ENCODE measurements at regions of chr6 and their contacts with region 1.

Region 1: DNA sequence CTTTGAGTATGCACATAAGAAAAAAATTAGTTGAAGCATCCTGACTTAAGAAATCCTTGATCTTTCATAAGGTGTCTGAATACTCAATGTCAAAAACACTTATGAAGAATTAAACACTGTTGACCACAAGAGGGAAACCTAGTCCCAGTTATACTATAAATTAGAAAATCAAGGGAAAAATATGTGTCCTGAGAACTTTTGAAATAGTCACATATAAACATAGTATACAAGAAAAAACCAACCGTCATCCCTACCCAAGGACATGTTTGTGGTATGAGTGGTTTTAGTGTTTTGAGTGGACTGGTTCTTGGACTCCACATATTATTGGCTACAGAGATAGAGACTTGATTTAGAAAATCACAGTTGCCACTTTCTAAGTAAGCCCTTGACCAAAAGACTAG is 7.6 kb upstream of the HLA-DRA start:
- DNase-seq: no peak
- H3K4me3 Mint-ChIP-seq: no peak overlapping the region
- H3K27ac Mint-ChIP-seq: no peak overlapping the region
- H3K4me1 Mint-ChIP-seq: no peaks in the 10 kb centered on the region
- H3K27me3 Mint-ChIP-seq: peaks cover 2% of the 10 kb centered on the region

Region 2: DNA sequence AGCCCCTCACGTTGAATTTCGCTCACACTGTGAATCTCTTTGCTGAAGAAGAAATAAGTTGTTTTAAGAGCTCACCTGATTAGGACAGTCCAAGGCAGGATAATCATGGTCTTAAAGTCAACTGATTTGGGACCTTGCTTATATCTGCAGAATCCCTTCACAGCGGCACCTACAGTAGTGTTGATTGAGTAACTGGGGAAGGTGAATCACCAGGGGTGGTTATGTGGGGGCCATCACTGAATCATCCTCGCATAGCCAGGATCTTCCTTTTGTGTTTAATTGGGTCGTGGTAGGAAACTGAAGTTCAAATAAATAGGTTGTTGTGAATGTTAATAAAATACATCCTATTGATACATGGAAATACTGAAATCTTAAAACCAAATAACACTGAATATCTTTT is 1048.9 kb before region 1 on chr6:
- CTCF ChIA-PET with region 1: no interaction called
- POLR2A ChIA-PET with region 1: no interaction called
- intact Hi-C with region 1: no loop called
- DNase-seq: peak; percentile 25
- H3K4me3 Mint-ChIP-seq: no peak overlapping the region
- H3K27ac Mint-ChIP-seq: no peak overlapping the region
- H3K4me1 Mint-ChIP-seq: no peaks in the 10 kb centered on the region
- H3K27me3 Mint-ChIP-seq: peaks cover 11% of the 10 kb centered on the region

Region 3: GRCh38 chr6:32298663-32299267 is 133.3 kb before region 1 on chr6:
- CTCF ChIA-PET with region 1: no interaction called
- POLR2A ChIA-PET with region 1: no interaction called
- intact Hi-C with region 1: no loop called
- DNase-seq: no peak
- H3K4me3 Mint-ChIP-seq: no peak overlapping the region
- H3K27ac Mint-ChIP-seq: no peak overlapping the region
- H3K4me1 Mint-ChIP-seq: no peaks in the 10 kb centered on the region
- H3K27me3 Mint-ChIP-seq: peaks cover 14% of the 10 kb centered on the region

Region 4: GRCh38 chr6:32387589-32388340 is 44.3 kb before region 1 on chr6:
- CTCF ChIA-PET with region 1: no interaction called
- POLR2A ChIA-PET with region 1: no interaction called
- intact Hi-C with region 1: no loop called
- DNase-seq: no peak
- H3K4me3 Mint-ChIP-seq: no peak overlapping the region
- H3K27ac Mint-ChIP-seq: no peak overlapping the region
- H3K4me1 Mint-ChIP-seq: no peaks in the 10 kb centered on the region
- H3K27me3 Mint-ChIP-seq: peaks cover 30% of the 10 kb centered on the region

Region 5: DNA sequence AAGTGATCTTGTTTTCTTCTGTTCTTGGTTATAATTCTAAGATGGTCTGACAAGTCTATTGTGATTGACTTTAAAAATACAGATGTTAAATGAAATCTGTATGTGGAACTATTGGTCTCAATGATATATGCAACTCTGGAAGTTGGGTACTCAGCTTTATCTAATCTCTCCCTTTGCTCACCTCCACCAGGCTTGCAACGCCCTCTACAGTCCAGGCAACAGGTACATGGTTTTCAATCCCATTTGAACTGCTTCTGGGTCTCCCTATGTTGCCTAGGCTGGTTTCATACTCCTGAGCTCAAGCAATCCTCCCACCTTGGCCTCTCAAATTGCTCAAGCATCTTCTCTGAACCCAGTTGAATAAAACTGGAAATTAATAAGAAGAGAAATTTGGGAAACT is 260.0 kb after region 1 on chr6:
- CTCF ChIA-PET with region 1: interaction called, 12 read pairs
- POLR2A ChIA-PET with region 1: no interaction called
- intact Hi-C with region 1: loop called (anchors 1 kb)
- DNase-seq: peak; percentile 65
- H3K4me3 Mint-ChIP-seq: no peak overlapping the region
- H3K27ac Mint-ChIP-seq: no peak overlapping the region
- H3K4me1 Mint-ChIP-seq: peaks cover 6% of the 10 kb centered on the region
- H3K27me3 Mint-ChIP-seq: peaks cover 9% of the 10 kb centered on the region

Region 6: DNA sequence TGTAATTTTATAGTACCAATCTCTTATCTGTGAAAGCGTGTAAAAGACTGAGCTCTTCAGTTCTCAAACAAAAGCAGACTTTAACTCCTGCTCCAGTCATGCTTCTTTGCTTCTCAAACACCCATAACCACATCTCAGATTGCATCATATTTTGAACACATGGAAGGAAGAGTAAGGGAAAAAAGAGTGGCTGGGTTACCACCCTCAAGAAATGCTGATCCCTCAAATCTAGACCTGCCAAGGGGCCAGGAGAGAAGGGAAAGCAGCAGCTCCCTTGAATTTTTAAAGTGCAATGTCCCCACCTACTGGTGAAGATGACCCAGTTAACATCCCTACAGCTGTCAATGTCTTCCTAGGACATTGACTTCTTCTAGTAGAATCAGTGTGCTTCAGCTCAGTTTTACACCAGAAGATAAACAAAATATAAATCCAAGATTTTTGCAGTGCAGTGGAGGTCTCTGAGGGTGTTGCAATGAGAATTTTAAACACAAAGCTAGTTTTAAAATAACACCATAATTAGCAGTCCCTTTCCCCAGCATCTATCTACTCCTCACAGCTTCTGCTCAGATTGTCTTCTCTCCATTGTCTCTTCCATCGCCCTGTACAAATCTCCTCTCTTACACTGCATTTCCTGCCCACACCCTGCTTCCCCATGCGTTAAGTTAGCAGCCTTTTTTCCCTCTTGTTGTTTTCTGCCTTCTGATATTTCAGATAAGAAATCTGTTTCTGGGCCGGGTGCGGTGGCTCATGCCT is 353.9 kb after region 1 on chr6:
- CTCF ChIA-PET with region 1: interaction called, 9 read pairs
- POLR2A ChIA-PET with region 1: no interaction called
- intact Hi-C with region 1: loop called (anchors 5 kb)
- DNase-seq: peak; percentile 21
- H3K4me3 Mint-ChIP-seq: no peak overlapping the region
- H3K27ac Mint-ChIP-seq: no peak overlapping the region
- H3K4me1 Mint-ChIP-seq: no peaks in the 10 kb centered on the region
- H3K27me3 Mint-ChIP-seq: peaks cover 42% of the 10 kb centered on the region

Measured in activated CD4-positive, alpha-beta memory T cell treated with anti-CD3 and anti-CD28 coated beads for 36 hours (primary cell).